GM12878 (cell line): ENCODE measurements at regions of chr17 and their contacts with region 1.

Region 1: GRCh38 chr17:49180303-49180702 is 30.1 kb downstream of the GNGT2 start:
- DNase-seq: peak; percentile 28
- ATAC-seq: peak; percentile 78
- H3K4me3 ChIP-seq: no peak overlapping the region
- H3K27ac ChIP-seq: no peak overlapping the region
- H3K4me1 ChIP-seq: no peaks in the 10 kb centered on the region
- H3K27me3 ChIP-seq: no peaks in the 10 kb centered on the region
- CTCF ChIP-seq: peak; percentile 81 to 88 (median 88)
- EP300 ChIP-seq: no peak
- POLR2A ChIP-seq: no peak
- RAD21 ChIP-seq: peak; percentile 91

Region 2: GRCh38 chr17:49191917-49192741 is 11.8 kb after region 1 on chr17:
- CTCF ChIA-PET with region 1: interaction called, 41 read pairs
- POLR2A ChIA-PET with region 1: interaction called, 7 read pairs
- RAD21 ChIA-PET with region 1: interaction called, 5 read pairs
- SMC1A ChIA-PET with region 1: interaction called, 17 read pairs
- in situ Hi-C with region 1: no loop called
- intact Hi-C with region 1: no loop called
- DNase-seq: peak; percentile 77
- ATAC-seq: peak; percentile 63
- H3K4me3 ChIP-seq: peak overlapping the region; percentile 85
- H3K27ac ChIP-seq: peak overlapping the region; percentile 98
- H3K4me1 ChIP-seq: peaks cover 28% of the 10 kb centered on the region
- H3K27me3 ChIP-seq: no peaks in the 10 kb centered on the region
- CTCF ChIP-seq: peak; percentile 32 to 54 (median 37); a peak in 4 of 6 replicates
- EP300 ChIP-seq: peak in 1 of 2 experiments; percentile 72; a peak in 1 of 4 replicates
- POLR2A ChIP-seq: peak; percentile 24; the same call in 1 of the 2 replicates
- RAD21 ChIP-seq: peak; percentile 14; the same call in 1 of the 2 replicates

Region 3: GRCh38 chr17:49217651-49218413 is 37.5 kb after region 1 on chr17:
- CTCF ChIA-PET with region 1: interaction called, 45 read pairs
- POLR2A ChIA-PET with region 1: interaction called, 4 read pairs
- RAD21 ChIA-PET with region 1: interaction called, 27 read pairs
- SMC1A ChIA-PET with region 1: interaction called, 28 read pairs
- in situ Hi-C with region 1: loop called (anchors 10 kb)
- intact Hi-C with region 1: no loop called
- DNase-seq: peak; percentile 93
- ATAC-seq: peak; percentile 68
- H3K4me3 ChIP-seq: no peak overlapping the region; the same call in 1 of the 2 replicates
- H3K27ac ChIP-seq: peak overlapping the region; percentile 77
- H3K4me1 ChIP-seq: peaks cover 64% of the 10 kb centered on the region
- H3K27me3 ChIP-seq: no peaks in the 10 kb centered on the region
- CTCF ChIP-seq: no peak
- EP300 ChIP-seq: peak; percentile 32 to 84; a peak in 2 of 4 replicates
- POLR2A ChIP-seq: peak; percentile 68
- RAD21 ChIP-seq: peak; percentile 23; the same call in 1 of the 2 replicates

Region 4: DNA sequence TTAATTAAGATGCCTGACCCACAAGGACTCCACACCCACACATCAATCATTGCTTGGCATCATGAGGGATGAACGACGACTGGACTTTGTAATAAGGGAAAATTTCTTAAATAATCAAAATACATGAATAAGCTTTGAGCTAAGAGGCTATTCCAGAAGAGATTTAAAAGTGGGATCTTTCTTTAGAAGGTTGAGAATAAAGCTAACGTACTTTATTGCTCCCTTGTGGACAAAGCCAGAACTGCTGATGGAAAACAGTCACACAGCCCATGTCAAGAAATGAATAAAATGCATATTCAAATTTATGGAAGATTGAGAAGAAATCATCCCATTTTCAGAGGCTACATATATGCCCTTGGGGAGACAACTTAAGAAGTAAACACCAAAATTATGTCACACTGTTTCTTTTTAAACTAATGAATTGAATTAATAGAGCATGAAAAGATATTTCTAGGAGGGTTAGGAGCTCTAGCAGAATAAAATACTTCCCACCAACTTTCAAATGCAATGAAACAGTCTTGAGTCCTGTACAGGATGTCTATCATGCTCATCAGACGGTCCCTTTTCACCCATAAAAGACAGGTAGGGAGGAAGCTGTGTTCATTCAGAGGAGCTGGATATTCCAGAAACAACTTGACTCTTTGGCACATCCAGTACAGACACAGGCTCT is 110.5 kb after region 1 on chr17:
- CTCF ChIA-PET with region 1: interaction called, 45 read pairs
- POLR2A ChIA-PET with region 1: no interaction called
- RAD21 ChIA-PET with region 1: interaction called, 23 read pairs
- SMC1A ChIA-PET with region 1: interaction called, 23 read pairs
- in situ Hi-C with region 1: no loop called
- intact Hi-C with region 1: no loop called
- DNase-seq: no peak
- ATAC-seq: peak; percentile 41; the same call in 1 of the 3 replicates
- H3K4me3 ChIP-seq: no peak overlapping the region
- H3K27ac ChIP-seq: no peak overlapping the region
- H3K4me1 ChIP-seq: no peaks in the 10 kb centered on the region
- H3K27me3 ChIP-seq: no peaks in the 10 kb centered on the region
- CTCF ChIP-seq: peak; percentile 48 to 62 (median 56); a peak in 4 of 6 replicates
- EP300 ChIP-seq: no peak
- POLR2A ChIP-seq: no peak
- RAD21 ChIP-seq: peak; percentile 56